ENCODE measurements at regions of chr7 and their contacts with region 1.

Region 1: GRCh38 chr7:94276795-94277194 is 117.9 kb upstream of the COL1A2 start:
- DNase-seq: peak; percentile 57
- H3K4me3 ChIP-seq: no peak overlapping the region
- H3K27ac ChIP-seq: no peak overlapping the region
- H3K4me1 ChIP-seq: no peaks in the 10 kb centered on the region
- H3K27me3 ChIP-seq: no peaks in the 10 kb centered on the region
- CTCF ChIP-seq: peak; percentile 25 to 29
- POLR2A ChIP-seq: no peak

Region 2: DNA sequence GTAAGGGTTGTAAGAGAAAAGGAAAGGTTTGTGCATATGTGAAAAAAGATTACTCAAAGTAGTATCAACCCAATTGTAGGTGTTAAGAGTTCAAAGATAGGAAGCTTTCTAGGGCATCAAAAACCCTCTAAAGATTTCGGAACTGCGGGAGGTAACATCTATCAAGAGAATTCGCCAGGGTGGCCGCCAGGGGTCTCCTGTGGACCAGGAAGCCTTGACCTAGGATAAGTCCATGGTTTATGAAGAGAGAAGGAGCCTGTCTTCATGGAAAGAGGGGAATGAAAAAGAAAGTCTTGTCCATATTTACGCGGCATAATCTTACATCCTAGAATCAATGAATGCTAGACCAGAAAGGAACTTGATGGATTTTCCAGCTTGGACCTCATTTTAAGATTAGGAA is 561.6 kb before region 1 on chr7:
- CTCF ChIA-PET with region 1: interaction called, 6 read pairs
- POLR2A ChIA-PET with region 1: no interaction called
- dilution Hi-C with region 1: no loop called
- intact Hi-C with region 1: loop called (anchors 1 kb)
- DNase-seq: peak; percentile 58
- H3K4me3 ChIP-seq: no peak overlapping the region
- H3K27ac ChIP-seq: no peak overlapping the region
- H3K4me1 ChIP-seq: no peaks in the 10 kb centered on the region
- H3K27me3 ChIP-seq: peaks cover 15 to 26% of the 10 kb centered on the region in 2 experiments
- CTCF ChIP-seq: peak; percentile 71 to 72
- POLR2A ChIP-seq: no peak

Region 3: DNA sequence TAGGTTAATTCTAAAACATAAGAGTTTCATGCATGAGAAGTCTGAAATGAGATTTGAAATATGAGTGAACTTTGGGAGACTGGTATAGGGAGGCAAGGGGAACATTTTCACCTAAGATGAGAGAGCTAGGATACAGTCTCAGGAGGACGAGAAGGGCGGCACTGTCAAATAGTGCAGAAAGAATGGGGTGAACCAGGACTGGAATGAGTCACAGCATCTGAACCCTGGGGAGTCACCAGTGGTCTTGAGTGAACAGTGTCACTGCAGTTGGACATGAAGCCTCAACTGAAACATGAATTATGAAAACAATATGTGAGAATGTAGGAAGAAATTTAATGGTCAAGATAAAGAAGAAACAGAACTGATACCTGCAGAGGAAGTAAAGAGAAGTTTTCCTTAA is 321.5 kb before region 1 on chr7:
- CTCF ChIA-PET with region 1: no interaction called
- POLR2A ChIA-PET with region 1: no interaction called
- dilution Hi-C with region 1: no loop called
- intact Hi-C with region 1: no loop called
- DNase-seq: no peak
- H3K4me3 ChIP-seq: no peak overlapping the region
- H3K27ac ChIP-seq: no peak overlapping the region
- H3K4me1 ChIP-seq: peaks cover 21% of the 10 kb centered on the region
- H3K27me3 ChIP-seq: no peaks in the 10 kb centered on the region
- CTCF ChIP-seq: no peak
- POLR2A ChIP-seq: no peak

Region 4: GRCh38 chr7:94069162-94069739 is 207.5 kb before region 1 on chr7:
- CTCF ChIA-PET with region 1: no interaction called
- POLR2A ChIA-PET with region 1: no interaction called
- dilution Hi-C with region 1: no loop called
- intact Hi-C with region 1: loop called (anchors 5 kb)
- DNase-seq: no peak
- H3K4me3 ChIP-seq: no peak overlapping the region
- H3K27ac ChIP-seq: no peak overlapping the region
- H3K4me1 ChIP-seq: peaks cover 20% of the 10 kb centered on the region
- H3K27me3 ChIP-seq: peaks cover 50 to 74% of the 10 kb centered on the region in 2 experiments
- CTCF ChIP-seq: no peak
- POLR2A ChIP-seq: no peak